B cell (primary cell): ENCODE measurements at regions of chr1 and their contacts with region 1.

Region 1: DNA sequence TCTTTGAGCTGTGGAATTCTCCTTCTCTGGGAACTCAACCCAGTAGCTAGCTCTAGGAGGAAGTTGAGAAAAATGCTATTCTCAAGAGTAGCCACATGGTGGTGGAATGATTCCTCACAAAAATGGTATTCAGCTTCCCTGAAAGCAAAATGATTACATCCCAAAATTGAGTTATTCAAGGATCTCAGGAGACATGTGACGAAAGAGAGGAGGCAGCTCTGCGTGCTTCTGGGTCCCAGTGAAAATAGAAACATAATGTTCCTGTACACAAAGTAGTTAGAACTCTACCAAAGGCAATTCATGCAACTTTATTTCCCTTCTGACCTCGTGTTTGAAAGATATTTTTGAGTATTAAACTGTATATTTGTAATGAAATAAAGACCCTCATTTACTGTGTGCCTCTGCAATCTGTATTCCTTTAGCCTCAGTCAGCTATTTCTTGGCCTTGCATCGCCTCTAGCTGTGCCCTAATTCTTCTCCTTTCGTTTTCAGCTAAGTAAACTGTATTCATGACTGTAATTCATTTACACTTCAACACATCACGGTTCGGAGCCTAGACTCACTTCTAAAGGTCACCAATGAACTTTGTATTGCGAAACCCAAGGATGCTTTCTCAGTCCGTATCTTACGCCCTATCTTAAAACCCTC is 167.3 kb downstream of the FASLG start:
- DNase-seq: peak; percentile 43
- ATAC-seq: peak; percentile 62
- H3K4me3 ChIP-seq: peak overlapping the region in 1 of 5 experiments; percentile 13
- H3K4me3 Mint-ChIP-seq: no peak overlapping the region
- H3K27ac ChIP-seq: no peak overlapping the region
- H3K27ac Mint-ChIP-seq: no peak overlapping the region
- H3K4me1 ChIP-seq: peaks cover 9% of the 10 kb centered on the region in 2 donors
- H3K4me1 Mint-ChIP-seq: no peaks in the 10 kb centered on the region
- H3K27me3 ChIP-seq: no peaks in the 10 kb centered on the region
- H3K27me3 Mint-ChIP-seq: no peaks in the 10 kb centered on the region
- CTCF ChIP-seq: peak; percentile 63

Region 2: GRCh38 chr1:172778456-172779455 is 47.5 kb before region 1 on chr1:
- CTCF ChIA-PET with region 1: interaction called, 24 read pairs
- POLR2A ChIA-PET with region 1: interaction called, 3 read pairs
- intact Hi-C with region 1: no loop called
- DNase-seq: peak; percentile 33
- ATAC-seq: peak; percentile 73
- H3K4me3 ChIP-seq: no peak overlapping the region
- H3K4me3 Mint-ChIP-seq: peak overlapping the region; percentile 28
- H3K27ac ChIP-seq: no peak overlapping the region
- H3K27ac Mint-ChIP-seq: no peak overlapping the region
- H3K4me1 ChIP-seq: peaks cover 13 to 14% of the 10 kb centered on the region in 2 donors
- H3K4me1 Mint-ChIP-seq: peaks cover 26% of the 10 kb centered on the region
- H3K27me3 ChIP-seq: no peaks in the 10 kb centered on the region
- H3K27me3 Mint-ChIP-seq: no peaks in the 10 kb centered on the region
- CTCF ChIP-seq: peak; percentile 39

Region 3: DNA sequence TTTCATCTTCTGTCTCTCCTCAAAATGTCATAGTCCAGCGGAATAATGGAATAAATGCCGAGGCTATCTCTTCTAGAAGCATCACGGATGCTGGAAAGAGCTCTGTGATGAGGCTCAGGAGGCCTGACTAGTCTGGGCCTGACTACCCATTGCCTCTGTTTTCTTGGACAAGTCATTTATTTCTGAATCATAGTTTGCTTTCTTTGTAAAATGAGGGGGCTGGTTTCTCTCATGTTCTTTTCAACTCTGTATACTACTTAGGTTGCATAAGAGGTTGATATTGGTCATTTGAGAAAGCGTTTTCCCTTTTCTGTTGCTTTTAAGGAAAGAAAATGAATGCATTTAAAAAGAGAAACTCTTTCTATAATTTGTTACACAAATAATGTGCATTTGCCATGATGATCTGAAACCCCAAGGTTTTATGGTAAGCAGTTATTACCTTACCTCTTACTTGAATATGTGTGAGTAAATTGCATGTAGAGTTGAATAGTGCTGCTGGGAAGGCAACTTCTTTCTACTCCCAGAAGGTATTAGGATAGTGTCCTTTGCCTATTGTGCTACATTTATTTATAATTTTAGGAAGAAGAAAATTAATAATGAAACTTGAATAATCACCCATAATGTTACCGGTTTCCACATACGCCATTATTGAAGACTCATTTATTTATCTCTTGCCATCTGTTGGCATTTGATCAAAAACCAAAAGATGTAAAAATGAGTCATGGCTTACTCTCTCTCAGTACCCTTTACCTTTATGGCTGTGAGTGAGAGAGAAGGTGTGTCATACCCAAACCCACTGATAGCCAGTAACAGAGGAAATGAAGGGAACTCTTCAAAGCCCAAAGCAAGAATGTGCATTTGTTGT is 11.8 kb after region 1 on chr1:
- CTCF ChIA-PET with region 1: interaction called, 16 read pairs
- POLR2A ChIA-PET with region 1: no interaction called
- intact Hi-C with region 1: no loop called
- DNase-seq: no peak
- ATAC-seq: no peak
- H3K4me3 ChIP-seq: no peak overlapping the region
- H3K4me3 Mint-ChIP-seq: no peak overlapping the region
- H3K27ac ChIP-seq: no peak overlapping the region
- H3K27ac Mint-ChIP-seq: no peak overlapping the region
- H3K4me1 ChIP-seq: no peaks in the 10 kb centered on the region
- H3K4me1 Mint-ChIP-seq: no peaks in the 10 kb centered on the region
- H3K27me3 ChIP-seq: no peaks in the 10 kb centered on the region
- H3K27me3 Mint-ChIP-seq: no peaks in the 10 kb centered on the region
- CTCF ChIP-seq: no peak